ENCODE measurements at regions of chr10 and their contacts with region 1.

Region 1: GRCh38 chr10:63247771-63248170 is 114.6 kb downstream of the NRBF2 start:
- DNase-seq: no peak
- H3K4me3 ChIP-seq: no peak overlapping the region
- H3K27ac ChIP-seq: no peak overlapping the region
- H3K4me1 ChIP-seq: peaks cover 0 to 31% (median 10%) of the 10 kb centered on the region in 4 donors
- H3K27me3 ChIP-seq: no peaks in the 10 kb centered on the region
- CTCF ChIP-seq: no peak
- EP300 ChIP-seq: no peak
- POLR2A ChIP-seq: no peak

Region 2: GRCh38 chr10:63227207-63227915 is 20.4 kb before region 1 on chr10:
- in situ Hi-C with region 1: no loop called
- intact Hi-C with region 1: loop called (anchors 1 kb)
- DNase-seq: no peak
- H3K4me3 ChIP-seq: no peak overlapping the region
- H3K27ac ChIP-seq: no peak overlapping the region
- H3K4me1 ChIP-seq: peaks cover 0 to 38% (median 11%) of the 10 kb centered on the region in 4 donors
- H3K27me3 ChIP-seq: no peaks in the 10 kb centered on the region
- CTCF ChIP-seq: no peak
- EP300 ChIP-seq: no peak
- POLR2A ChIP-seq: no peak

Region 3: GRCh38 chr10:63297941-63298340 is 50.2 kb after region 1 on chr10:
- in situ Hi-C with region 1: no loop called
- intact Hi-C with region 1: no loop called
- DNase-seq: no peak
- H3K4me3 ChIP-seq: no peak overlapping the region
- H3K27ac ChIP-seq: no peak overlapping the region
- H3K4me1 ChIP-seq: peaks cover 0 to 3% (median 0%) of the 10 kb centered on the region in 4 donors
- H3K27me3 ChIP-seq: no peaks in the 10 kb centered on the region
- CTCF ChIP-seq: no peak
- EP300 ChIP-seq: no peak
- POLR2A ChIP-seq: no peak

Region 4: DNA sequence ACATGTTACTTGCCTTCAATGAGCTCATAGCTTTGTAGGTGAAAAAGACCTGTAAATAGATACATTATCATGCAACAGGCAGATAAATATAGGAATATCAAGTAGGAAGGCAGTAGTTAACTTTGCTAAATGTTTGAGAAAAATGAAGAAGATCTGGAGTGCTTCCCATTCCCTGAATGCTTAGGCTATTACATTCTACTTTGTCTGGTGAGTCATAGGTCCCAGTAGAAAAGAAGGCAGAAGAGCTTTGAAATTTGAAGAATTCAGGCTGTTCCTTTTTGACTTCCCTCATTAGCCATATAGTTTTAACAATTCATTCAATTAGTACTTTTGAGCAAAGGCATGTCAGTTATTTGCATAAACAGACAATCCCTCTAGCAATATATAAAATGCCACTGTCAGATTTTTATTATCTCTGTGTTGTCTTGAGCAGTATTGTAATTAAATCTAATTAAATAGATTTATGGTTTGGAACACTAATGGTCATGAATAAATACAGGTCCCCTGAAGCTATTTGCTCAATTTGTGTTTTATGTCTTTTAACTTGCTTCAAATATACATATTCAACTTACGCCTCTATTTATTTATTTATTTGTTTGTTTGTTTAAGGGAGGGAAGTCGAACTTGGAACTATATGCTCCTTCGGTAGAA is 1148.5 kb after region 1 on chr10:
- in situ Hi-C with region 1: no loop called
- intact Hi-C with region 1: no loop called
- DNase-seq: no peak
- H3K4me3 ChIP-seq: no peak overlapping the region
- H3K27ac ChIP-seq: no peak overlapping the region
- H3K4me1 ChIP-seq: no peaks in the 10 kb centered on the region
- H3K27me3 ChIP-seq: no peaks in the 10 kb centered on the region
- CTCF ChIP-seq: no peak
- EP300 ChIP-seq: no peak
- POLR2A ChIP-seq: no peak